ENCODE measurements at regions of chr6 and their contacts with region 1.

Region 1: DNA sequence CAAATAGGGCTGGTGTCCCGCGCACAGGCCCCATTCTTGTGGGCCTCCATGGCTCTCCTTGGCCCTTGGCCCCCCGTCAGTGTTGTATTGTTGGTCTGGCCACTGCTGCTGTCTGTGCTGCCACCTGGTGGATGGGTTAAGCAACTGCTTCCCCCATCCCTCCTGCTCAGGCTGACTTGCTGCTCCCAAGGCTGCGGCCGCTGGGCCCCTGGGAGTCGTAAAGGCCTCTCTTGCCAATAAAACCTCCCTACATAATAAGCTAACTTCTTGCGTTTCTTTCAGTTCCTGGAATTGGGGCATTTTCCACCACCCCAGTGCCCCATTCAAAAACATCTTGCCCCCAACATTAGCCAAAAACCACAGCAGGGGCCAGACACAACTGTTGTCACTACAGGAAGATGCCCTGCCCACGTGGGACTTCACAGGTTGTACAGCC is 27.1 kb downstream of the CD83 start:
- DNase-seq: peak; percentile 68
- H3K4me3 Mint-ChIP-seq: no peak overlapping the region
- H3K27ac Mint-ChIP-seq: no peak overlapping the region
- H3K4me1 Mint-ChIP-seq: peaks cover 5% of the 10 kb centered on the region
- H3K27me3 Mint-ChIP-seq: no peaks in the 10 kb centered on the region

Region 2: GRCh38 chr6:13908955-13909381 is 235.7 kb before region 1 on chr6:
- CTCF ChIA-PET with region 1: interaction called, 23 read pairs
- POLR2A ChIA-PET with region 1: no interaction called
- DNase-seq: peak; percentile 39
- H3K4me3 Mint-ChIP-seq: no peak overlapping the region
- H3K27ac Mint-ChIP-seq: no peak overlapping the region
- H3K4me1 Mint-ChIP-seq: no peaks in the 10 kb centered on the region
- H3K27me3 Mint-ChIP-seq: peaks cover 53% of the 10 kb centered on the region

Region 3: DNA sequence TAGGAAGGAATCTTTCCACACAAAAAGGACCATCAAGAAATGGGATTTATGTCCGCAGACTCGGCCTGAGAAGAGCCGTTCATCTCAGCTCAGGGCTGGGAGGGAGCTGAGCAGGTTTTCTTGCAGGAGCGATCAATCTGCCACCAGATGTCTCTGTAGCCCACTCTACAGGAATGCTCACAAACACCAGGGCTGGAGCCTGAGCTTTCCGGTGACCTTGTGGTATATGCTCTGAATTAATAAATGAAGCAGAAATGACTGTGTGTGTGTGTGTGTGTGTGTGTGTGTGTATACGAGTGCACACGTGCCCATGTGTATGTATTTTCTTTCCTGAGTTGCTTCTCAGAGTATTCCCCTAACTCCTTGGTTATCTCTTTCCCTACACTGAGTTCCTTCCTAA is 15.1 kb before region 1 on chr6:
- CTCF ChIA-PET with region 1: interaction called, 14 read pairs
- POLR2A ChIA-PET with region 1: no interaction called
- DNase-seq: peak; percentile 32
- H3K4me3 Mint-ChIP-seq: no peak overlapping the region
- H3K27ac Mint-ChIP-seq: no peak overlapping the region
- H3K4me1 Mint-ChIP-seq: peaks cover 16% of the 10 kb centered on the region
- H3K27me3 Mint-ChIP-seq: no peaks in the 10 kb centered on the region

Measured in activated CD4-positive, alpha-beta memory T cell treated with anti-CD3 and anti-CD28 coated beads, Interleukin-2, amount 10 ng/mL, durations not matched to agents 7 days and 5 days (primary cell).